PC-3 (cell line): ENCODE measurements at regions of chr10 and their contacts with region 1.

Region 1: GRCh38 chr10:66627156-66627555 is 298.7 kb upstream of the LRRTM3 start:
- DNase-seq: peak; percentile 96
- ATAC-seq: peak; percentile 92
- H3K4me3 ChIP-seq: no peak overlapping the region
- H3K27ac ChIP-seq: no peak overlapping the region
- H3K4me1 ChIP-seq: peaks cover 37% of the 10 kb centered on the region
- H3K27me3 ChIP-seq: no peaks in the 10 kb centered on the region
- CTCF ChIP-seq: peak; percentile 99

Region 2: DNA sequence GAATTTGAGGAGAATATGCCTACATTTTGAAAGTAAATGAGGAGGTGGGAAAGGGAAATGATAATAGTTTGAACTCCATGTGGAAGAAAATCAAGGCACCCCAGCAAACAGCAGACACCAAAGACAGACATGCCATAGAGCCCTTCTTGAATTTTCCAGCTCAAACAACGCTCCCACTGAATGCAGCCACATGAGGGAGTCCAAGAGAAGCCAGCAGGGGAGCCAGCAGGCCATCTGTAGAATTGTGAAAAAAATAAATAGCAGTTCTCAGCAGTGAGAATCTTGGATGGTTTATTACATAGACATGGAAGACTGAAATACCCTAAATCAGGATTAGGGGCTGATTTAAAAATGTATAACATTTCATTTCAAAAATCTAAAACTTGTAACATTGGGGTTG is 1268.6 kb before region 1 on chr10:
- CTCF ChIA-PET with region 1: no interaction called
- POLR2A ChIA-PET with region 1: no interaction called
- intact Hi-C with region 1: loop called (anchors 10 kb)
- DNase-seq: peak; percentile 76
- ATAC-seq: peak; percentile 94
- H3K4me3 ChIP-seq: no peak overlapping the region
- H3K27ac ChIP-seq: no peak overlapping the region
- H3K4me1 ChIP-seq: no peaks in the 10 kb centered on the region
- H3K27me3 ChIP-seq: no peaks in the 10 kb centered on the region
- CTCF ChIP-seq: peak; percentile 96

Region 3: GRCh38 chr10:66307826-66308225 is 319.3 kb before region 1 on chr10:
- CTCF ChIA-PET with region 1: no interaction called
- POLR2A ChIA-PET with region 1: no interaction called
- intact Hi-C with region 1: loop called (anchors 1 kb)
- DNase-seq: peak; percentile 78
- ATAC-seq: peak; percentile 87
- H3K4me3 ChIP-seq: no peak overlapping the region
- H3K27ac ChIP-seq: no peak overlapping the region
- H3K4me1 ChIP-seq: no peaks in the 10 kb centered on the region
- H3K27me3 ChIP-seq: no peaks in the 10 kb centered on the region
- CTCF ChIP-seq: peak; percentile 91

Region 4: DNA sequence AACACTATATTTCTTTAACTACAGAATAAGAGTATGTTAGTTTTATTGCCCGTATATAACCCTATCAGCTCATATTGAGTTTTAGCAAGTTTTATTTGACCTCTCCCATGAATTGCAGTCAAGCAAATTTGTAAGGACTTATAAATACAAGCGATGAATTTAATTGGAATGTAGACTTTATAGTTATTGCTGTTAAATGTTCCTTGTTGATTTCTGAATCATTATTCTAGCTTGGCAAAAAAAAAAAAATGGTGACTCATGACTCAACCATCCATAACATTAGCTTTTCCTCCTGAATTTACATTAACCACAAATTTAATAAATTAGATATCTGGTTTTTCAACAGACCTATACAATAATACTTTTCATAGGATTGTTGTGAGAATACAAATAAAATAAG is 35.3 kb before region 1 on chr10:
- CTCF ChIA-PET with region 1: interaction called, 3 read pairs
- POLR2A ChIA-PET with region 1: no interaction called
- intact Hi-C with region 1: loop called (anchors 1 kb)
- DNase-seq: peak; percentile 98
- ATAC-seq: peak; percentile 83
- H3K4me3 ChIP-seq: no peak overlapping the region
- H3K27ac ChIP-seq: 0 out of 2 replicates have a peak overlapping the region, but pooled peaks have one; percentile 1
- H3K4me1 ChIP-seq: peaks cover 18% of the 10 kb centered on the region
- H3K27me3 ChIP-seq: no peaks in the 10 kb centered on the region
- CTCF ChIP-seq: no peak

Region 5: GRCh38 chr10:66925896-66926715 is 298.9 kb after region 1 on chr10 and contains the start of gene LRRTM3:
- CTCF ChIA-PET with region 1: interaction called, 5 read pairs
- POLR2A ChIA-PET with region 1: no interaction called
- intact Hi-C with region 1: loop called (anchors 1 kb)
- DNase-seq: peak; percentile 99
- ATAC-seq: peak; percentile 99
- H3K4me3 ChIP-seq: peak within 1 kb of the TSS; percentile 42
- H3K27ac ChIP-seq: no peak within 1 kb of the TSS
- H3K4me1 ChIP-seq: peaks cover 18% of the 10 kb centered on the region
- H3K27me3 ChIP-seq: peaks cover 6% of the 10 kb centered on the region; the same call in 1 of the 2 replicates
- CTCF ChIP-seq: peak; percentile 99
- total RNA-seq, gene LRRTM3: 0.12 and 0.15 TPM in 2 replicates